ENCODE measurements at regions of chr1 and their contacts with region 1.

Region 1: DNA sequence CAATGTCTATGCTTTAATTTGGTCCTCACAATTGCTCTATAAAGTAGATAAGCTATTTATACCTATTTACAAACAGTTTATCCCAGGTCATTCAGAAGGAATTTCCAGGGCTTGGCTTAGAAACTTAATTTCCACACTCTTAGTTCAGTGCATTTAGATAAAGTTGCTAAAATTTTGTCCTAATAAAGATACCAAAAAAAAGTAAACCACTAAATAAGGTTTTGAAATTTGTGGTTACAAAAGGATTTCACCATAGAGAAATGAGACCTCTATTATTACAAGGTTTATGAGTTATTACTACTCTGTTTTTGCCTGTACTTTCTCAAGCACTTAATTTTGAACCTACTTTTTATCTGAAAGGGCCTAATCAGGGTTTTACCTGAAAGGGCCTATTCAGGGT is 22.5 kb downstream of the PTPN22 start:
- DNase-seq: peak in 1 of 3 donors; percentile 53
- H3K4me3 ChIP-seq: no peak overlapping the region
- H3K4me3 Mint-ChIP-seq: no peak overlapping the region
- H3K27ac ChIP-seq: peak overlapping the region in 1 of 2 donors; percentile 65
- H3K27ac Mint-ChIP-seq: peak overlapping the region in 4 of 7 donors; percentile 59 to 74 (median 71)
- H3K4me1 ChIP-seq: peaks cover 17 to 20% of the 10 kb centered on the region in 2 donors
- H3K4me1 Mint-ChIP-seq: peaks cover 25% of the 10 kb centered on the region
- H3K27me3 ChIP-seq: no peaks in the 10 kb centered on the region
- H3K27me3 Mint-ChIP-seq: peaks cover 0 to 1% (median 0%) of the 10 kb centered on the region in 3 donors
- CTCF ChIP-seq: no peak

Region 2: DNA sequence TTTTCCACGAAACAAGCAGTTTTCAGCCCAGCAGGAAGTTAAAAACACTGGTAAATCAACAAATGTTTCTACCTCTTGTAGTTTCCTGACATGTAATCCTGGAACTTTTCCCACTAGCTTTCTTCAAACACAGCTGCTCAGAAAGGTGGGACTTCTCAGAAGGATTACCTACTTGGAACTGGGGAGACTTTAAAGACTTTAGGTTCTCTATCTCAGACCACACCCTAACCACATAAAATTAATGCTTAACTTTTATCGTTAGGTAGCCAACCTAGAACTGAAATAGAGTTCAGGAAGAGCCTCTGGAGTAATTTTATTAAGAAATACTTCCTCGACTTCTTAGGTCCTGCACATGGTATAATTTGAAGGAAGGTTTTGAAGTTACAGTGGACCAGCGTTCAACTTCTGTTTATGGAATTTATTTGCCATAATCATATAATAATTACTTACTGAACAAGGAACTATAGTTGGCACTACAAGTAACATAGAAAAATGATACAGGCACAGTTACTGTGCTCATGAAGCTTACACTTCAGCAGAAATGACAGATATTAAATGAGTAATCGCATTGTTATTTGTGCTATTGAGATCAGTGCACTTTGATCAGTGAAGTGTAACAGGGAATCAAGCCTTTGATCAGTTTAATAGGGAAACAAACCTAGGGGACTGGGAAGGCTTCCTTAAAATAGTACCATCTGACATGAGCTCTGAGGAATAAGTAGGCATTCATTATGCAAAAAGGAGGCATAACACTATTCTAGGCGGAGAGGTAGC is 38.5 kb after region 1 on chr1 and contains the start of gene BCL2L15:
- intact Hi-C with region 1: loop called in 1 of 2 experiments (anchors 5 kb)
- DNase-seq: no peak
- H3K4me3 ChIP-seq: no peak within 1 kb of the TSS
- H3K4me3 Mint-ChIP-seq: no peak within 1 kb of the TSS
- H3K27ac ChIP-seq: no peak within 1 kb of the TSS
- H3K27ac Mint-ChIP-seq: peak within 1 kb of the TSS in 1 of 7 donors; percentile 5
- H3K4me1 ChIP-seq: peaks cover 11 to 28% of the 10 kb centered on the region in 2 donors
- H3K4me1 Mint-ChIP-seq: peaks cover 25% of the 10 kb centered on the region
- H3K27me3 ChIP-seq: no peaks in the 10 kb centered on the region
- H3K27me3 Mint-ChIP-seq: peaks cover 0 to 2% (median 0%) of the 10 kb centered on the region in 3 donors
- CTCF ChIP-seq: no peak
- polyA plus RNA-seq, gene BCL2L15: 0.73 TPM in 1 of 3 donors, not detected in the others